ENCODE measurements at regions of chr12 and their contacts with region 1.

Region 1: DNA sequence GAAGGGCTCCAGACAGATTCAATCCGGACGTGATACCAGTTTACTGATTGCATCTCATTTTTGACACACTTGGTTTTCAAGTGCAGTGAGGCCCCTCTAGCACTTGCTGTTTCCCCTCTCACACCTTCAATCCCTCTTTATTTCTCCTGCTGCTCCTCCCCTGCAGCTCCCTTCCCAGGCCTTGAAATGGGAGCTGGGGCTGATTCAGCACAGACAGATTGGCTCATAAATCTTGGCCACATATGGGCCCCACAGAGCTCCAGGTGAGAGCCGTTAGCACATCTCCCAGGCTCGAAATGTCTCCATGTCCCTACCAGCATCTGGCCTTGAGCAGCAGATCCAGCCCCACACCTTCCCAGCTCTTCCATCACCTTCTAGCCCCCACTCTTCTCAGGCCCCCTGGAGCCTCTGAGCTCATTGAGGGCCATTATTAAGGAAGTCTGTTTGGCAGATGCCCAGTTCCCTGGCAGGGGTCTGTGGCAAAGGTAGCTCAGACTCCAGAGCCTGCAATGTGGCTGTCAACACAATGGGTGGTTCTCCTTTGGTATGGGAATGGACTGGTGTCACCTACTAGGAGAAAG is 220.3 kb upstream of the FKBP4 start:
- DNase-seq: no peak
- H3K4me3 Mint-ChIP-seq: no peak overlapping the region
- H3K27ac Mint-ChIP-seq: no peak overlapping the region
- H3K4me1 Mint-ChIP-seq: no peaks in the 10 kb centered on the region
- H3K27me3 Mint-ChIP-seq: peaks cover 34% of the 10 kb centered on the region

Region 2: DNA sequence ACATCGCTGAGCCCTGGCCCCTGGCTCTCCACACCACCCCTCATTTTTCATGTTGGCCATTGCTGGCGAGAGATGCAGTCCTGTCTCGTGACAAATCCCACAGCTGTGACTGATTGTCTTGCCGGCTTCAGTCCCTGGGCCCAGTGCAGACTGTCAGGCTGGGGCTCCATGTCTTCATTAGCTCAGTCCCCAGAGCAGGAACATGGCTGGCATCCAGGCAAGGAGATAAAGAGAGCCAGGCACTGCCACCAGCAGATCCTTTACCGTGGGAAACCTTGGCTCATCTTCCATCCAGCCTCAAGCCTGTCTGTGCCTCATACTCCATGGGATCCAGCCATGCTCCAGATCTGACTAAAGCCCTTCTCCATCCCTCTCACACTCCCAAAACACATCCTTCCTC is 64.4 kb before region 1 on chr12:
- intact Hi-C with region 1: loop called (anchors 10 kb)
- DNase-seq: no peak
- H3K4me3 Mint-ChIP-seq: no peak overlapping the region
- H3K27ac Mint-ChIP-seq: no peak overlapping the region
- H3K4me1 Mint-ChIP-seq: peaks cover 3% of the 10 kb centered on the region
- H3K27me3 Mint-ChIP-seq: peaks cover 4% of the 10 kb centered on the region

Region 3: DNA sequence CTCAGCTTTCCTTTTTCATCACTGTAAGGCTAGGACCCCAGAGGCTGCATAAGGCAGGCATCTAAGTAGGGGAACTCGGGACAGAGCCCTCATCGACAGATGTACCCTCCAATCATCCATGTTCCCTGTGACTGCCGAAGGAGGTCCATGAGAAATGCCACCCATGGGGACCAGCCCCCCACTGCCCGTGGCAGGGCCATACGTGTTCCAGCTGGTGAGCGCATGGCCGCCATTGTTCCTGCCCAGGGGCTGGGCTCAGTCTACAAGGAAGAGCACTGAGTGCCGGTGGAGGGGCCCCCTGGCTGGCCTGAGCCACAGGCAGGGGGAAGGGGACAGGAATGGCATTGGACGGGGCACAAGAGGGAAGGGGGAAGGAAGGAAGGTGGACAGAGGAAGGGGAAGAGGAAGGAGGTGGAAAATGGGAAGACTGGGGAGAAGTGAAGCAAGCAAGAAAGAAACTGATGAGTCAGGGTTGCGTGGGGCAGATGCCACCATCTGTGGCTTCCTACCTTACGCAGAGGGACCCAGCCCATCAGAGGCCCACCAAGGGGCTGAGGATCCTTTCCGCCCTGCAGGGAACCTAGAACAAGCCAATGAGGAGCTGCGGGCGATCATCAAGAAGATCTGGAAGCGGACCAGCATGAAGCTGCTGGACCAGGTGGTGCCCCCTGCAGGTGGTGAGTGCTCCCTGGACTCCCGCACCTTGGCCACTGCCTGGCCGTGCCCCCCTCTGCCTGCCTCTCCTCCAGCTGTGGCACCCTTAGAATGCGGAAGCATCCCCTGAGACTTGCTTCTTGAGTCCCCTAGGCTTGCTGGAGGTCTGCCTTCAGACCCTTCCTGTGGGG is 99.7 kb after region 1 on chr12:
- intact Hi-C with region 1: no loop called
- DNase-seq: no peak
- H3K4me3 Mint-ChIP-seq: no peak overlapping the region
- H3K27ac Mint-ChIP-seq: no peak overlapping the region
- H3K4me1 Mint-ChIP-seq: no peaks in the 10 kb centered on the region
- H3K27me3 Mint-ChIP-seq: no peaks in the 10 kb centered on the region